ENCODE measurements at regions of chr12 and their contacts with region 1.

Region 1: DNA sequence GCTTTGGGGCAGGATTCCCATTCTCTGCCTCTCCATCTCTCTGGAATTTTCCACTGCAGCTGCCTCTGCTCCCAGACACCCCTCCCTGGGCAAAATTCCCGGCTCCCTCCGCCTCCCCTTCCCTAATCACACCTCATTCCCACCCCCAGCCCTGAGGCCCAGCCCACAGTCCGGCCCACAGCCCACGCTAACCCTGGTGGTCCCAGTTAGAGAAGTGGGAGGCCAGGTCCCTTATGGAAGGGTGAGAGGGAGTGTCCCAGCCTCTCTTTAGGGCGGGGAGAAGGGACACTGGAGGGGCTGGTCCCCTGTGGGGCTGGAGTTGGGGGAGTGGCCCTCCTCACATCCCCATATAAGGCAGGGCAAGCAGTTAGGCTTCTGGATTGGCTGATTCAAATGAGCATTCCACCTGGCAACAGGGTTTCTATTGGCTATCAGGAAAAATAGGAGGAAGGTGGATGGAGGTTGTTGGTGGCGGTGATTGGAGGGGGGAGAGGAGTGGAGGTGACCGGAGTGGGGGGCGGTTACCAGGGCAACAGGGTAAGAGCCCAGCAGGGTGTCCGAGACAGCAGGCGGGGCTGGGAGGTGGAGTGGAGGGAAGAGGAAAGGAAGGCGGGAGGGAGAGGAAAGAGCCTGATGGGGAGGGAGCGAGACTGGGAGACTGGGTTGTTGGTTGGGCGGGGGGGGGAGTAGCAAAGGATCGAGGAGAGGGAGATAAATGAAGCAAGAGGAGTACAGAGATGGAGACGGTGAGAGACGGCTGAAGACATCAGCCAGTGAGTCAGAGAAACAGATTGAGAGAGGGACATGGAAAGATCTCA is 1.9 kb upstream of the PTMS start:
- DNase-seq: peak; percentile 96
- ATAC-seq: peak; percentile 56
- H3K4me3 Mint-ChIP-seq: peak overlapping the region; percentile 62
- H3K27ac Mint-ChIP-seq: peak overlapping the region; percentile 89
- H3K4me1 Mint-ChIP-seq: peaks cover 56% of the 10 kb centered on the region
- H3K27me3 Mint-ChIP-seq: peaks cover 7% of the 10 kb centered on the region
- CTCF ChIP-seq: no peak

Region 2: GRCh38 chr12:6553051-6553868 is 211.0 kb before region 1 on chr12:
- CTCF ChIA-PET with region 1: no interaction called
- POLR2A ChIA-PET with region 1: no interaction called
- DNase-seq: no peak
- ATAC-seq: no peak
- H3K4me3 Mint-ChIP-seq: peak overlapping the region; percentile 25; the same call in 1 of the 2 replicates
- H3K27ac Mint-ChIP-seq: no peak overlapping the region
- H3K4me1 Mint-ChIP-seq: peaks cover 29% of the 10 kb centered on the region
- H3K27me3 Mint-ChIP-seq: no peaks in the 10 kb centered on the region
- CTCF ChIP-seq: no peak

Region 3: DNA sequence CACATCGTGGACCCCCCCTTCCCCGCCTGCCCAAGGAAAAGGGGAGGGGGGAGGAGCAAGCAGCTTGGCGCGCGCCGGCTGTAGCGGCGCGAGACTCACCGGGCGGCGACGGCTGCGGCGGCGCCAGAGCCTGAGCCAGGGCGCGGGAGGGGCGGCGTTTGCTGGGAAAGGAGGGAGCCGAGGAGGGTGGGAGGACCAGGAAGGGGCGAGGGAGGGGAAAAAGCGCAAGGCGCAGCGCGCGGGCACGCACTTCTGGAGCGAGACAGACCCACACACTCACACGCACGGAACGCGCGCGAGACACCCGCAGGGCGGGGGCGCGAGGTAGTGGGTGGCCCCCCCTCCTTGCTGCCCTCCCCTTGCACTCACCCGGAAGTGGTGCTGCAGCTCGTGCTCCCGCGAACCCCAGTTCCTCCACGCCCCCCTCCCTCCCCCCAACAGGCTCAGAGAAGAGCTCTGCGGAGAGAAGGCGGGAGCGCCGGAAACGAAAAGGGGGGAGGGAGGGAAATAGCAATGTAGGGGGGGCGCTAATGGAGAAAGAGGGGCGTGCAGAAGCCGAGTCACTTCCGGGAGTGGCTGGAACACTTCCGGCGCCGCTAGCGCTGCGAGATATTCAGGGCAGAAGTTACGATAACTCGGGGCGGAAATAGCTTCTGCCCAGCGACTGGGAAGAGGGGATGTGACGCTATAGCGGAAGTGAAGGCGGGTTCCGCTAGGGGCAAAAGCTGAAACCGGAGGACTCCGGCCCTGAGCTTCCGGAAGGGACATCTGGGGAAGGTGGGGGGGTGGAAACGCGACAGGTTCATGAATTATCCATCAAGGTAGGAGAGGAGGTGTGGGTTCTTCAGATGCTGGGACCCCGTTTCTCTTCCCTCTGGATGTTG is 75.0 kb before region 1 on chr12 and contains the start of gene ZNF384:
- CTCF ChIA-PET with region 1: interaction called, 9 read pairs
- POLR2A ChIA-PET with region 1: interaction called, 13 read pairs
- DNase-seq: peak; percentile 95
- ATAC-seq: peak; percentile 81
- H3K4me3 Mint-ChIP-seq: peak within 1 kb of the TSS; percentile 86
- H3K27ac Mint-ChIP-seq: peak within 1 kb of the TSS; percentile 95
- H3K4me1 Mint-ChIP-seq: peaks cover 23% of the 10 kb centered on the region
- H3K27me3 Mint-ChIP-seq: 0 out of 2 replicates have a peak, but pooled peaks cover under 1% of the 10 kb centered on the region
- CTCF ChIP-seq: no peak
- total RNA-seq, gene ZNF384: 63.8 to 64.7 TPM (median 64.4 TPM) in 3 replicates

Region 4: GRCh38 chr12:6723607-6724396 is 40.4 kb before region 1 on chr12 and contains the start of gene COPS7A:
- CTCF ChIA-PET with region 1: interaction called, 11 read pairs
- POLR2A ChIA-PET with region 1: interaction called, 5 read pairs
- DNase-seq: peak; percentile 98
- ATAC-seq: peak; percentile 98
- H3K4me3 Mint-ChIP-seq: peak within 1 kb of the TSS; percentile 88
- H3K27ac Mint-ChIP-seq: peak within 1 kb of the TSS; percentile 98
- H3K4me1 Mint-ChIP-seq: peaks cover 11% of the 10 kb centered on the region
- H3K27me3 Mint-ChIP-seq: peaks cover 16% of the 10 kb centered on the region
- CTCF ChIP-seq: no peak
- total RNA-seq, gene COPS7A: 41.2 to 43.8 TPM (median 41.4 TPM) in 3 replicates

Region 5: DNA sequence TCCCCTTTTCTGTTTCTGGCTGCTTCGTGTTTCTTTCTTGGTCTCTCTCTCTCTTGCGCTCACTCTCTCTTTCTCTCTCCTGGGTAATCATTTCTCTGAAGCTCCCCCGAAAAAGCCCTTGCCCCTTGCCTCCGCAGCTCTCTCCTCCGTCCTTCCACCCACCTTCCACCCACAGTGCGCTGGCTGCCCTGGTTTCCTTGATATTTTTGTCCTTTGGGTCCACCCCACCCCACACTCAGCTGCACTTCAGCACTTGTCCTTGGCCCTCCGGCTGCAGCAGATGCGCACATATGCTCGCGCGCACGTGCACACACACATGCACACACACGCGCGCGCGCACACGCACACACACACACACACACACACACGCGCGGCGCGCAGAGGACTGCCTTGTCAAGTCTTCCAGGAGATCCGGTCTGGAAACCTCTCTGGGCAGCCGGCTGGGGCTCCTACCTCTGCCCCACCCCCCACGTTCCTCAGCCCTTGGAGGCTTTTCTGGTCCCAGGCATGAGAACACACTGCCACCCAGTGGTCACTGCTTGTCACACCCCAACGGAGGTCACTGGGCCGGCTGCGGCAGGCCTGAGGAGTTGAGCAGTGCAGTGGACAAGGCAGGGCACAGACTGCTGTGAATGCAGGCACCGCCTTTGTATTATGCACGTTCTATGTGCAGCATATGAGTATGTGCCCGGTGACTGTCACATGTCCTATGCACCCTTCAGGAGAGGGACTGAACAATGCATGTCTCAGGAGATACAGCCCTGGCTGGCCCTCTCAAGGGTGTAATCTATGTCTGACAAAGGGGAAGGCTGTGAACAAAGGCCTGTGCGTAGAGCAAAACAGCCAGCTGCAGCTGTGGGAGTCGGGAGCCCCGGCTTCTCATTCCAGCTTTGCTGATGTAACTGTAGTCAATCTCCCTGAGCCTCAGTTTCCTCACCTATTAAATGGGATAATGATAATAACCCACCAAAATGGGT is 14.6 kb after region 1 on chr12:
- CTCF ChIA-PET with region 1: interaction called, 50 read pairs
- POLR2A ChIA-PET with region 1: interaction called, 19 read pairs
- DNase-seq: peak; percentile 97
- ATAC-seq: peak; percentile 92
- H3K4me3 Mint-ChIP-seq: peak overlapping the region; percentile 95
- H3K27ac Mint-ChIP-seq: peak overlapping the region; percentile 77
- H3K4me1 Mint-ChIP-seq: peaks cover 30% of the 10 kb centered on the region
- H3K27me3 Mint-ChIP-seq: peaks cover 44% of the 10 kb centered on the region
- CTCF ChIP-seq: peak; percentile 88

Region 6: GRCh38 chr12:6825398-6826124 is 61.3 kb after region 1 on chr12:
- CTCF ChIA-PET with region 1: interaction called, 110 read pairs
- POLR2A ChIA-PET with region 1: interaction called, 14 read pairs
- DNase-seq: peak; percentile 95
- ATAC-seq: peak; percentile 35
- H3K4me3 Mint-ChIP-seq: peak overlapping the region; percentile 78
- H3K27ac Mint-ChIP-seq: no peak overlapping the region
- H3K4me1 Mint-ChIP-seq: peaks cover 60% of the 10 kb centered on the region
- H3K27me3 Mint-ChIP-seq: peaks cover 45% of the 10 kb centered on the region
- CTCF ChIP-seq: peak; percentile 90

Region 7: DNA sequence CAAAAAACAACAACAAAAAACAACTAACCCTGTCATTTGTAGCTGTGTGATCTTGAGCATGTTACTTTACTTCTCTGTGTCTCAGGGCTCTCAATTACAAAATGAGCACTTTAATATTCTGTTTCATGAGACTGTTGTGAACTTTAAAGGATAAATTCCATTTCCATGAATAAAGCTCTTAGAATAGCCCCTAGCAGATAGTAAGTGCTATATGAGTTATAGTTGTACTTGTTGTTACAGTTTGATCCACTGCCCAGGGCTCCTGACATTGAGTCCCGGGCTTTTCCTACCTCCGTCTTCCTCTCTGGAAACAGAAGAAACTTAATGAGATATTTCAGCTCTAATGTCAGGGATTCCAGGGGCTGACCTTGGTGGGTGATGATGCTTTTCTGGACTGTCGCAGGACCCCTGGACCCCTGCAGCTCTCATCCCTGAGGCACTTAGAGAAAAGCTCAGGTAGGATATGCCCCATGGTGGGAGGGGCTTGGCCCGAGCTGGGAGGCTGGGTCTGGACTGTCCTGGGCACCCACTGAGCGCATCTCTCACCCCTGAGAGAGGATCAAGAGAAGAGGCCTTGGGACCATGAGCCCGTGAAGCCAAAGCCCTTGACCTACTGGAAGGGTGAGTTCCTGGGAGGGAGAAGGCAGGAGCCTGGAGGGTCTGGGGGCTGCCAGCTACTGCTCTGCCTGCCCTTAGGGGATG is 69.1 kb after region 1 on chr12:
- CTCF ChIA-PET with region 1: interaction called, 110 read pairs
- POLR2A ChIA-PET with region 1: interaction called, 7 read pairs
- DNase-seq: no peak
- ATAC-seq: no peak
- H3K4me3 Mint-ChIP-seq: no peak overlapping the region
- H3K27ac Mint-ChIP-seq: no peak overlapping the region
- H3K4me1 Mint-ChIP-seq: peaks cover 18% of the 10 kb centered on the region
- H3K27me3 Mint-ChIP-seq: no peaks in the 10 kb centered on the region
- CTCF ChIP-seq: no peak

Region 8: GRCh38 chr12:6914246-6914946 is 150.2 kb after region 1 on chr12 and contains the start of gene ENO2:
- CTCF ChIA-PET with region 1: no interaction called
- POLR2A ChIA-PET with region 1: no interaction called
- DNase-seq: peak; percentile 63
- ATAC-seq: peak; percentile 65
- H3K4me3 Mint-ChIP-seq: peak within 1 kb of the TSS; percentile 97
- H3K27ac Mint-ChIP-seq: peak within 1 kb of the TSS; percentile 64
- H3K4me1 Mint-ChIP-seq: peaks cover 33% of the 10 kb centered on the region
- H3K27me3 Mint-ChIP-seq: peaks cover 12% of the 10 kb centered on the region
- CTCF ChIP-seq: no peak
- total RNA-seq, gene ENO2: 118 to 170 TPM (median 165 TPM) in 3 replicates